ENCODE measurements at regions of chr14 and their contacts with region 1.

Region 1: GRCh38 chr14:23068476-23069412 is 11.4 kb upstream of the CDH24 start:
- DNase-seq: peak; percentile 88
- H3K4me3 Mint-ChIP-seq: peak overlapping the region; percentile 15
- H3K27ac Mint-ChIP-seq: peak overlapping the region; percentile 30
- H3K4me1 Mint-ChIP-seq: peaks cover 41% of the 10 kb centered on the region
- H3K27me3 Mint-ChIP-seq: no peaks in the 10 kb centered on the region

Region 2: GRCh38 chr14:22837750-22838538 is 230.8 kb before region 1 on chr14:
- CTCF ChIA-PET with region 1: no interaction called
- intact Hi-C with region 1: no loop called
- DNase-seq: no peak
- H3K4me3 Mint-ChIP-seq: no peak overlapping the region
- H3K27ac Mint-ChIP-seq: no peak overlapping the region
- H3K4me1 Mint-ChIP-seq: peaks cover 14% of the 10 kb centered on the region
- H3K27me3 Mint-ChIP-seq: peaks cover 4% of the 10 kb centered on the region

Region 3: DNA sequence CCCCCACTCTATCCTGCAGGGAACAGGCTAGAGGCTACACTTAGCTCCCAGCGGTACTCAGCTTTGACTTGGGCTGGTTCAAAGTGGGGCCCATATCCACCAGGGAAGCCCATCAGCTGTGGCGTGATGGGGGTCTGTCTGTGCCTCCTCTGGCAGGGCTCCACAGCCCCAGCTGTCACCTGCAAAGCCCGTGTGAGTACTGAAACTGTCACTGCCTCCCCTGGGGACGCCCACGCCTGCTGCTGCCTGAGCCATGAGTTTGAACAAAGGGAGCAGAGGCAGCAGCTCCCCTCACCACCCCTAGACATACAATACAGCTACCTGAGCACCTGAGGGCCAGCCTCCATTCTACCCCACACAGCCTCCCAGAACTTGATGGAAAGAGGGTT is 180.8 kb before region 1 on chr14:
- CTCF ChIA-PET with region 1: no interaction called
- intact Hi-C with region 1: no loop called
- DNase-seq: peak; percentile 59
- H3K4me3 Mint-ChIP-seq: peak overlapping the region; percentile 83
- H3K27ac Mint-ChIP-seq: peak overlapping the region; percentile 13
- H3K4me1 Mint-ChIP-seq: peaks cover 45% of the 10 kb centered on the region
- H3K27me3 Mint-ChIP-seq: peaks cover 2% of the 10 kb centered on the region

Region 4: DNA sequence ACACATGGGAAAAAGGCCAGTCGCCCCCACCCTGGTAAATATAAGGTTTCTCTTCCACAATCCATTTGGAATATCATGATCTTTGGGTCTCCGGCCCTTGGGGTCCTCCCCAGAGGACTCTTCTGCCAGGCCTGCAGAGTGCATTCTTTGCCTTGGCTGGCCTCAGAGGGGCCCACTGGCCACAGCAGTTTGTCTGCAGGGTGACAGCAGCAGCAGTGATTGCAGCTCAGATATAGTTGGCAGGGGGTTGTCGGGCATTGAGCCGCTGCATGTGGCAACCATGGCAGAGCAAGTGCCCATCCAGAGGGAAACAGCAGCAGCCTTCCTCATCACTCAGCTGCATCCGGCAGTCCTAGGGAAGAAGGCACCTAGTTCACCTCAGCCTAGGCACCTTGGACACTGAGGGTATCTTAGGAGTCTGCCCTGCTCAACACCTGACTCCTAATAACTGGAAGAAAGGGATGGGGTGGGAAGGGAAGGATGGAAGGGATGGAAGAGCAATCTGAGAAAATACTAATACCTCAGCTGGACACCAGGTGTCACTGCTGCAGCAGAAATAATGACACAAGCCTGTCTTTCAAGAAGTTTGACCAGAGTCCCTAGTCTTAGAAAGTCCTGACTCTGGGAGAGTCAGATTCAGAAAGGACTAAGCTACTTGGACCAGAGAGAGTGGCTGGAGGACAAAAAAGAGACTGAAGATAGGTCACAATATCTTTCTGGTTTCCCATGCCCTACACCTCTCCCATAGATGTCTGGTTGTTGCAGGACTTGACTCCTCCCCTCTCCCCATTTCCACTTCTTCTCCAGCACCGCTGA is 95.3 kb before region 1 on chr14:
- CTCF ChIA-PET with region 1: interaction called, 22 read pairs
- intact Hi-C with region 1: no loop called
- DNase-seq: peak; percentile 64
- H3K4me3 Mint-ChIP-seq: no peak overlapping the region
- H3K27ac Mint-ChIP-seq: no peak overlapping the region
- H3K4me1 Mint-ChIP-seq: no peaks in the 10 kb centered on the region
- H3K27me3 Mint-ChIP-seq: no peaks in the 10 kb centered on the region

Region 5: GRCh38 chr14:23025151-23025814 is 43.5 kb before region 1 on chr14:
- CTCF ChIA-PET with region 1: interaction called, 25 read pairs
- intact Hi-C with region 1: no loop called
- DNase-seq: peak; percentile 55
- H3K4me3 Mint-ChIP-seq: peak overlapping the region; percentile 16
- H3K27ac Mint-ChIP-seq: peak overlapping the region; percentile 85
- H3K4me1 Mint-ChIP-seq: peaks cover 73% of the 10 kb centered on the region
- H3K27me3 Mint-ChIP-seq: no peaks in the 10 kb centered on the region

Region 6: DNA sequence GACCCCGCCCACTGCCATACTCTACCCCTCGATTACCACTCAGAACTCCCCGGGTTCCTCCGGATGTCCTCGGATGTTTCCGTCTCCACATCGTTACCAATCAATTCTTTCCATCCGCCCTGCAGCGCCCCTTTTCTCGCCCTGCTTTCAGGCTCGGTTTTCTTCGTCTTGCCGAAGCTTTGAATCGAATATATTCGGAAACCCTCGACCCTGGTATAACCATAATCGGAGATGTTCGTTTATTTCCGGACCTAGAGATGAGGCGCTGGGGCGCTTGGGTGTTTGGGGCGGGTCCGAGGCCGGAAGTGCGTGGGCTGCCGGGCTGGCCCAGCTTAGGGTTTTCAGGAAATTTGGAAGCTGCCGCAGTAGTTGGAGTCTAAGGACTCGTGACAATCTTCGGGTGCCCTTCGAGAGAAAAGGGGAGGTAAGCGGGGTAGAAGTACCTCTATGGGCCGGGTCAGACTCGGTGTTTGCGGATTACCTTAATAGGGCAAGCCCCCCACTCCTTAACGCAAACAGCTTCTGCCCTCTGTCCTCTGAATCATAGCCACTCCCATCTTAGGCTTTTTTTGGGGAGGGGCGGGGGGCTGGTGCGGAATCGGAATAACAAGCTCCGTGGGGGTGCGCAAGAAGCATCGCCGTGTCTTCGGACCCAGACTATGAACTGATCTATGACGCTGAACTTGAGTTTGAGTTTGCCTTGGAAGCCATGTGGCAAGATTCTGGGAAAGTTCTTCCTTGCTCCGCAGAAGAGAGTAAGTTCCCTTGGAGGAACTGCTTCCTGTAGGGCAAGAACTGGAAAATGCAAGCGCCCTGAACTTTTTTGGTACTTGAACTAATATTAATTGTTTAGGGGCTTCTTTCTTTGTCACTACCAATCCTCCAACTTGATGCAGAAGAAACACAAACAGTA is 26.7 kb after region 1 on chr14 and contains the start of gene C14orf119:
- CTCF ChIA-PET with region 1: interaction called, 42 read pairs
- intact Hi-C with region 1: loop called (anchors 1 kb)
- DNase-seq: peak; percentile 100
- H3K4me3 Mint-ChIP-seq: no peak within 1 kb of the TSS
- H3K27ac Mint-ChIP-seq: no peak within 1 kb of the TSS
- H3K4me1 Mint-ChIP-seq: peaks cover 38% of the 10 kb centered on the region
- H3K27me3 Mint-ChIP-seq: no peaks in the 10 kb centered on the region
- total RNA-seq, gene C14orf119: 39.8 to 44.2 TPM

Region 7: GRCh38 chr14:23186913-23187654 is 118.3 kb after region 1 on chr14:
- CTCF ChIA-PET with region 1: interaction called, 16 read pairs
- intact Hi-C with region 1: loop called (anchors 1 kb)
- DNase-seq: peak; percentile 55
- H3K4me3 Mint-ChIP-seq: no peak overlapping the region
- H3K27ac Mint-ChIP-seq: no peak overlapping the region
- H3K4me1 Mint-ChIP-seq: no peaks in the 10 kb centered on the region
- H3K27me3 Mint-ChIP-seq: no peaks in the 10 kb centered on the region

Region 8: GRCh38 chr14:23301288-23301968 is 232.7 kb after region 1 on chr14:
- CTCF ChIA-PET with region 1: interaction called, 3 read pairs
- intact Hi-C with region 1: loop called (anchors 1 kb)
- DNase-seq: peak; percentile 96
- H3K4me3 Mint-ChIP-seq: peak overlapping the region; percentile 90
- H3K27ac Mint-ChIP-seq: peak overlapping the region; percentile 92
- H3K4me1 Mint-ChIP-seq: peaks cover 12% of the 10 kb centered on the region
- H3K27me3 Mint-ChIP-seq: peaks cover 13% of the 10 kb centered on the region